GM12878 (cell line): ENCODE measurements at regions of chr4 and their contacts with region 1.

Region 1: DNA sequence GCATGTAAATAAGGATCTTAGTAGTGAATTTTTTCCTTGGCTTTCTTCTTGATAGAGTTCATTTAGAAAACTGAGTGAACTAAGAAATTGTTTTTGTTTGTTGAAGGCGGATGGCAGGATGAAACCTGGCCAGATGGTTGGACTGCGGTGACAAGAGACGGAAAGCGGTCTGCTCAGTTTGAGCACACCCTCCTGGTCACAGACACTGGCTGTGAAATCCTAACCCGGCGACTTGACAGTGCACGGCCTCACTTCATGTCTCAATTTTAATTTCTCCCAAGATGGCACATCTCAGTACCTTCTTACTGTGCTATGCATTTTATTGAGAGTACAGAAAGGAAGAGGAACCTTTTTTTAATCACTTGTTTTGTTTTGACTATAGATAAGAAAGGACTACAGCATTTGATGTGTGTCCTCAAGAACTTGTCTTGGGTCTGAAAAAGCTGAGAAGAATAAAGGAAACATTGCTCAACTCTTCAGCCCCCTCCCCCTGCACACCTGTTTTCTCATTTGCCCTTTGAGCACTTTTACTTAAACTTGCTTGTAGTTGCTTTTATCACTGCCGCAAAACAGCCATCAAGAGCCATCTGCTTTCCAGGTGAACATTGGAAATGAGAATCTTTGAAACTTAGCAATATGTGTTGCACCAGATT is 27.4 kb downstream of the ADH5 start:
- DNase-seq: no peak
- ATAC-seq: no peak
- H3K4me3 ChIP-seq: no peak overlapping the region
- H3K27ac ChIP-seq: no peak overlapping the region
- H3K4me1 ChIP-seq: peaks cover 6% of the 10 kb centered on the region; the same call in 1 of the 2 replicates
- H3K27me3 ChIP-seq: no peaks in the 10 kb centered on the region
- CTCF ChIP-seq: no peak
- EP300 ChIP-seq: no peak
- POLR2A ChIP-seq: no peak
- RAD21 ChIP-seq: no peak

Region 2: GRCh38 chr4:98150092-98150761 is 910.9 kb before region 1 on chr4:
- CTCF ChIA-PET with region 1: interaction called, 11 read pairs
- POLR2A ChIA-PET with region 1: no interaction called
- RAD21 ChIA-PET with region 1: no interaction called
- SMC1A ChIA-PET with region 1: interaction called, 12 read pairs
- in situ Hi-C with region 1: loop called (anchors 10 kb)
- intact Hi-C with region 1: loop called (anchors 5 kb)
- DNase-seq: no peak
- ATAC-seq: no peak
- H3K4me3 ChIP-seq: no peak overlapping the region
- H3K27ac ChIP-seq: no peak overlapping the region
- H3K4me1 ChIP-seq: no peaks in the 10 kb centered on the region
- H3K27me3 ChIP-seq: no peaks in the 10 kb centered on the region; a peak in 1 of 4 replicates
- CTCF ChIP-seq: no peak; a peak in 1 of 6 replicates
- EP300 ChIP-seq: no peak
- POLR2A ChIP-seq: no peak
- RAD21 ChIP-seq: no peak

Region 3: DNA sequence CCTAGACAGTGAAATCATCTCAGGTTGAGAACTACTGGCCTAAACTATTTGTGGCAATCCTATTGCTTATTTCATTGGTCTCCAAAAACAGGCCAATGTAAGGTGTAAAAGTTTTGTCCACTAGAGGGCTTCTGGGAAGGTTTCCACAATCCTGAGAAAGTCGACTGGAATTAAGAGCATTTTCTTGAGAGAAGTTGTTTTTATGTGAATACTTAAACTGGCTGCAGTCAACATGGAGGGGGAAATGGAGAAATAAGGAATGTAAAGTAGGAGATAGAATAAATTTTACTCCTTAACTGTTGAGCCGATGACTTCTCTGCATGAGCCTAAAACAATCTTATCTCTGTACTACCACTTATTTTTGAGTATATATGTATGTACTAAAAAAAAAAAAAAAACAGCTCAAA is 121.3 kb before region 1 on chr4:
- CTCF ChIA-PET with region 1: interaction called, 15 read pairs
- POLR2A ChIA-PET with region 1: no interaction called
- RAD21 ChIA-PET with region 1: no interaction called
- SMC1A ChIA-PET with region 1: interaction called, 3 read pairs
- in situ Hi-C with region 1: no loop called
- intact Hi-C with region 1: loop called (anchors 5 kb)
- DNase-seq: no peak
- ATAC-seq: peak; percentile 82
- H3K4me3 ChIP-seq: no peak overlapping the region
- H3K27ac ChIP-seq: no peak overlapping the region
- H3K4me1 ChIP-seq: no peaks in the 10 kb centered on the region
- H3K27me3 ChIP-seq: no peaks in the 10 kb centered on the region
- CTCF ChIP-seq: peak; percentile 48 to 73 (median 65)
- EP300 ChIP-seq: no peak
- POLR2A ChIP-seq: no peak
- RAD21 ChIP-seq: peak; percentile 48